Panc1 (cell line): ENCODE measurements at regions of chr1 and their contacts with region 1.

Region 1: DNA sequence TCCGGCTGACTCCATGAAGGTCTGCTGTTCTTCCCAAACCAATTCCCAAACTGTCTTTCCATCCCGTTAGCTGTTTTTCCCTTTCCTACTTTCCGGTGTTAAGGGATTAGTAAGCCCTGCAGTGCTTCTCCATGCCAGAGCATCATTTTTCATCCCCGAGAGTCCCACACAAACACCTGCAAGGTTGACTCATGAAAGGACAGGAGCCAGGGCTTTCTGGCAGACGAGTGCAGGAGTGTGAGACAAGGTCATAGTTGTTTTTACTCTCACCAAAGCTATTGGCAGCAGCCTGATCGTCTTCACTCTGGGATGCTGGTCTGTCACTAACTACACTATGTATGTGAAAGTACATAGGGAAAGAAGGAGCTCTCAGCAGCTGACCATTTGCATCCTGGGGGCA is 10.2 kb upstream of the BECN2 start:
- DNase-seq: no peak
- ATAC-seq: no peak
- H3K4me3 ChIP-seq: no peak overlapping the region
- H3K27ac ChIP-seq: no peak overlapping the region
- H3K4me1 ChIP-seq: peaks cover 5% of the 10 kb centered on the region
- H3K27me3 ChIP-seq: no peaks in the 10 kb centered on the region
- CTCF ChIP-seq: no peak

Region 2: DNA sequence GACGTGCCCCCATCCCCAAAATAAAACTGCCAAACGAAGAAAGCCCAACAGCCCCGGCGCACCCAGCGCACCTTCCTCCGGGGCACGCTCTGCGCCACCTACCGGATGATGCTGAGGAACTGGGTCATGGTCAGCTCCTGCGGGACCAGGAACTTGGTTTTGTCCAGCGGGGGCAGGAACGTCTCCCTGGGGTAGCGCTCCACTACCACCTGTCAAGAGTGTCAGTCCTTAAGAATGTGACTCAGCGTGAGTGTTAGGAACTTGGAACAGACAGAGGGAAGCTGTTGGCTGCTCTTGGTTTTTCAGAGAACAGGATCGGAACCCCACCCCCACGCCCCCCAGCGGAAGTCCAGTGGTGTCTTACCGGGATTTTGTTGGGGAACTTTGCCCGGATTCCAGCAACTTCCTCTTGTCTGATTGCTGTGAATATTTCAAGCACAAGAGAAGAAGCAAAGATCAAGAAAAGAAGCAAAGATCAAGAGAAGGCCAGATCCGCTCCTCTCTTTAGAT is 51.1 kb after region 1 on chr1:
- CTCF ChIA-PET with region 1: interaction called, 11 read pairs
- POLR2A ChIA-PET with region 1: no interaction called
- in situ Hi-C with region 1: no loop called
- intact Hi-C with region 1: no loop called
- DNase-seq: peak; percentile 72
- ATAC-seq: peak; percentile 96
- H3K4me3 ChIP-seq: peak overlapping the region; percentile 40 to 74
- H3K27ac ChIP-seq: peak overlapping the region; percentile 55
- H3K4me1 ChIP-seq: peaks cover 6% of the 10 kb centered on the region; the same call in 1 of the 2 replicates
- H3K27me3 ChIP-seq: no peaks in the 10 kb centered on the region
- CTCF ChIP-seq: peak; percentile 98